B cell (primary cell): ENCODE measurements at regions of chr2 and their contacts with region 1.

Region 1: GRCh38 chr2:232142049-232142448 is 180.5 kb downstream of the DIS3L2 start:
- DNase-seq: peak; percentile 35
- ATAC-seq: no peak
- H3K4me3 ChIP-seq: no peak overlapping the region
- H3K4me3 Mint-ChIP-seq: no peak overlapping the region
- H3K27ac ChIP-seq: no peak overlapping the region
- H3K27ac Mint-ChIP-seq: no peak overlapping the region
- H3K4me1 ChIP-seq: peaks cover 10 to 11% of the 10 kb centered on the region in 2 donors
- H3K4me1 Mint-ChIP-seq: peaks cover 23% of the 10 kb centered on the region
- H3K27me3 ChIP-seq: no peaks in the 10 kb centered on the region
- H3K27me3 Mint-ChIP-seq: no peaks in the 10 kb centered on the region
- CTCF ChIP-seq: peak; percentile 48

Region 2: GRCh38 chr2:231900972-231901371 is 241.1 kb before region 1 on chr2:
- CTCF ChIA-PET with region 1: interaction called, 24 read pairs
- POLR2A ChIA-PET with region 1: no interaction called
- intact Hi-C with region 1: loop called (anchors 1 kb)
- DNase-seq: no peak
- ATAC-seq: no peak
- H3K4me3 ChIP-seq: no peak overlapping the region
- H3K4me3 Mint-ChIP-seq: no peak overlapping the region
- H3K27ac ChIP-seq: no peak overlapping the region
- H3K27ac Mint-ChIP-seq: no peak overlapping the region
- H3K4me1 ChIP-seq: no peaks in the 10 kb centered on the region
- H3K4me1 Mint-ChIP-seq: no peaks in the 10 kb centered on the region
- H3K27me3 ChIP-seq: no peaks in the 10 kb centered on the region
- H3K27me3 Mint-ChIP-seq: peaks cover 2% of the 10 kb centered on the region
- CTCF ChIP-seq: no peak

Region 3: GRCh38 chr2:231925303-231926179 is 216.5 kb before region 1 on chr2:
- CTCF ChIA-PET with region 1: interaction called, 31 read pairs
- POLR2A ChIA-PET with region 1: no interaction called
- intact Hi-C with region 1: no loop called
- DNase-seq: peak; percentile 80
- ATAC-seq: peak; percentile 75
- H3K4me3 ChIP-seq: peak overlapping the region in 4 of 5 experiments; percentile 29 to 57 (median 46)
- H3K4me3 Mint-ChIP-seq: peak overlapping the region; percentile 77
- H3K27ac ChIP-seq: no peak overlapping the region
- H3K27ac Mint-ChIP-seq: no peak overlapping the region
- H3K4me1 ChIP-seq: peaks cover 27% of the 10 kb centered on the region in 2 donors
- H3K4me1 Mint-ChIP-seq: peaks cover 25% of the 10 kb centered on the region
- H3K27me3 ChIP-seq: peaks cover 0 to 57% (median 18%) of the 10 kb centered on the region in 4 experiments
- H3K27me3 Mint-ChIP-seq: peaks cover 41% of the 10 kb centered on the region
- CTCF ChIP-seq: peak; percentile 86

Region 4: GRCh38 chr2:232204457-232204931 is 62.4 kb after region 1 on chr2:
- CTCF ChIA-PET with region 1: no interaction called
- POLR2A ChIA-PET with region 1: no interaction called
- intact Hi-C with region 1: no loop called
- DNase-seq: no peak
- ATAC-seq: no peak
- H3K4me3 ChIP-seq: no peak overlapping the region
- H3K4me3 Mint-ChIP-seq: no peak overlapping the region
- H3K27ac ChIP-seq: no peak overlapping the region
- H3K27ac Mint-ChIP-seq: no peak overlapping the region
- H3K4me1 ChIP-seq: no peaks in the 10 kb centered on the region
- H3K4me1 Mint-ChIP-seq: peaks cover 3% of the 10 kb centered on the region
- H3K27me3 ChIP-seq: no peaks in the 10 kb centered on the region
- H3K27me3 Mint-ChIP-seq: no peaks in the 10 kb centered on the region
- CTCF ChIP-seq: no peak

Region 5: DNA sequence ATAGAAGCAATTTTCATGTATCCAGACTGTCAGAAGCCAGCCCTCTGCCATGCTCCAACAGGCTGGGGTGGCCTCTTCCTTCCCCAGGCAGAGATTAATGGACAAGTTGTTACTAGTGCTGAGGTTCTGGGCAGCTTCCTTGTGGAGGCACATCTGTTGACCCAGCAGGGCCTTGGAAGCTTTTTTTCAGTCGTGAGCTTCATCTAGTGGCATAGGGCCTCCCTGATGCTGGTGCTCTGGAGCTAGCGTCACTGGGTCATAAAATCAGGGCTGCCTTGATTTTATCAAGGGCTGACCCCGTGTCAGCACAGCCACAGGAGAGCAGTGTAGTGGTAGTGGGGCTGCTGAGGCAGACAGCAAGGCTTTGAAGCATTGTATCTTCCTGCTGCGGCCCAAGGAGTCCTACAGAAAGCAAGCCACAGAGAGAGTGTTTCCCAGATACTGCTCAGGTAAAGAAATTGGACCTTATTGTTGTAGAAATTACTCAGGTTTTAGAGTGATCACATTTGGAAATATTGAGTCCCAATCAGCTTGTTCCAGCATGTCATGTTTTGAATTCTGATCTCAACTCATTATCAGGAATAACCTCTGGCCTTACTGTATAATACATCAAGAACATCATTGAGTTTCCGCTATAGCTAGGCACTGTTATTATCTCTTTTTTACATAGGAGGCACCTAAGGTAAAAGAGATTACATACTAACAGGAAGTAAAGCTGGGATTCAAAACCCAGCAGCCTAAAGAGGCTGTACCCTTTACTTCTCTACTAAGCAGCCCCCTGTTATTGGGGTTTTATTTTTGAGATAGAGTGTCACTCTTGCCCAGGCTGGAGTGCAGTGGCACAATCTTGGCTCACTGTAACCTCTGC is 144.2 kb after region 1 on chr2:
- CTCF ChIA-PET with region 1: no interaction called
- POLR2A ChIA-PET with region 1: no interaction called
- intact Hi-C with region 1: no loop called
- DNase-seq: no peak
- ATAC-seq: no peak
- H3K4me3 ChIP-seq: no peak overlapping the region
- H3K4me3 Mint-ChIP-seq: no peak overlapping the region
- H3K27ac ChIP-seq: no peak overlapping the region
- H3K27ac Mint-ChIP-seq: no peak overlapping the region
- H3K4me1 ChIP-seq: no peaks in the 10 kb centered on the region
- H3K4me1 Mint-ChIP-seq: no peaks in the 10 kb centered on the region
- H3K27me3 ChIP-seq: no peaks in the 10 kb centered on the region
- H3K27me3 Mint-ChIP-seq: no peaks in the 10 kb centered on the region
- CTCF ChIP-seq: no peak

Region 6: GRCh38 chr2:233353769-233354499 is 1211.9 kb after region 1 on chr2 and contains the start of gene DGKD:
- CTCF ChIA-PET with region 1: no interaction called
- POLR2A ChIA-PET with region 1: no interaction called
- intact Hi-C with region 1: no loop called
- DNase-seq: peak; percentile 90
- ATAC-seq: peak; percentile 77
- H3K4me3 ChIP-seq: peak within 1 kb of the TSS; percentile 82 to 89 (median 83)
- H3K4me3 Mint-ChIP-seq: peak within 1 kb of the TSS; percentile 96
- H3K27ac ChIP-seq: peak within 1 kb of the TSS; percentile 89 to 97
- H3K27ac Mint-ChIP-seq: peak within 1 kb of the TSS; percentile 96
- H3K4me1 ChIP-seq: peaks cover 79 to 85% of the 10 kb centered on the region in 2 donors
- H3K4me1 Mint-ChIP-seq: peaks cover 86% of the 10 kb centered on the region
- H3K27me3 ChIP-seq: no peaks in the 10 kb centered on the region
- H3K27me3 Mint-ChIP-seq: no peaks in the 10 kb centered on the region
- CTCF ChIP-seq: peak; percentile 14
- total RNA-seq, gene DGKD: 396 and 397 TPM in 2 replicates